Gastrocnemius medialis (tissue), 4 donors: ENCODE measurements at regions of chr3 and their contacts with region 1.

Region 1: GRCh38 chr3:31550452-31551251 is 17.9 kb downstream of the STT3B start:
- DNase-seq: no peak
- ATAC-seq: peak; percentile 57 to 69
- H3K4me3 ChIP-seq: no peak overlapping the region
- H3K27ac ChIP-seq: peak overlapping the region in 1 of 4 donors; percentile 29
- H3K4me1 ChIP-seq: peaks cover 58 to 67% of the 10 kb centered on the region in 2 donors
- H3K27me3 ChIP-seq: no peaks in the 10 kb centered on the region
- CTCF ChIP-seq: peak; percentile 47 to 77 (median 56)
- POLR2A ChIP-seq: no peak

Region 2: DNA sequence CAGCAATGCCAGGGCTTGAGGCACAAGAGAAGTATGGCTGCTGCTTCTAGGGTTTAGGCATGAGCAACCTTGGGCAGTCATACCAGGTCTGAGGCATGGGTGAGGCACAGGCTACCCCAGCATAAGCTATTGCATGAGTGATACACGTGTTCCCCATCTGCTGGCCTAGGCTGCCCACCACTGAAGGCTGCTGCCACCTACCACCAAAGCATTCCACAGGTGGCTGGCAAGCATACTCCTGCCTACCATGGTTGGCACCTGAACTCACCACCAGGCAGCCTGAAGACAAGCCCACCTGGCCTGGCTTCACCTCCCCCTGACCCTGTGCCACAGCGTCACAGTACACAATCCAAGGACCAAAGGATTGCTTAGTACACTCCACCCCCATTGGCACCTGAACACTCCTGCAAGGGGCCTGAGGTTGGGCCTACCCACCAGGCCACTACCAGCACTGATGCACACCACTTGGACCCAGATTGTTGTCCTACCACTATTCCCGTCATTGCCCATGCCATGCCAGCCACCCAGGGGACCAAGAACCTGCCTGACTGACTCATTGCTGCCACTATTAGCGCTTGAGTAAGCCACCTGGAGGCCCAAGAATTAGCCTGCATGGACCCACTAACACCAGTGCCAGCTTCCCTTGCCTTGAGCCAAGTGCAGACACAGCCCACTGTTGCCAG is 97.8 kb after region 1 on chr3:
- in situ Hi-C with region 1: no loop called
- intact Hi-C with region 1: loop called (anchors 5 kb)
- DNase-seq: no peak
- ATAC-seq: no peak
- H3K4me3 ChIP-seq: no peak overlapping the region
- H3K27ac ChIP-seq: no peak overlapping the region
- H3K4me1 ChIP-seq: peaks cover 0 to 7% of the 10 kb centered on the region in 2 donors
- H3K27me3 ChIP-seq: no peaks in the 10 kb centered on the region
- CTCF ChIP-seq: no peak
- POLR2A ChIP-seq: no peak

Region 3: DNA sequence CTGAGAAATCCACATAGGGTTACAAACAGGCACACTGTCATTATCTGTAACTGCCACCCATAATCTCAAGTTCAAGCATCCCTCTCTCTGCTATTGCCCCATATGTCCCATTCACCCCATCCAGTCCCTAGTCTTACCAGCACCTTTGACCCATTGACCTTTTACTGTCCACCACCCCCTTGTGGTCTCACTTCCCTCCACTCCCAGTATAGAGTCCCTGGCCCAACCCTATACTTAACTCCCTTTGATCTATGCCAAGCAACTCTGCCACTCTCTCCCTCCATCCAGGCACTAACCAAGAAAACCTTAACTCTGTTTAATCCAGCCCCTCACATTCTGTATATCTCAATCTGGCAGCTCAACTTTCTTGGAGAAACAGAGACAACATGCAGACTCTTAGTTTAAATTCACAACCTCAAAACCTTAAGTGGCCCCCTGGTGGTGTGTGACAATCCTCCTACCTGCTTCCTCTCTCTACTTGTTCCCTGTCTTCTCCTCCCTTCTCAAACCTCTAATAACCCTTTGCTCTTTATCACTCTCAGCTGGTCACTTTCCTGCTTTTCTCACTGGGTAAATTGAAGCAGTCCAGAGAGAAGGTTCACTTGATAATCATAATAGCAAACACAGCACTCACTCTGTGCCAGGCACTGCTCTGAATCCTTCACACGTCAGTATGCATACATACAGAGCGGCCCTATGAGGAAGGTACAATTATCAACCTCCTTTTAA is 144.8 kb after region 1 on chr3:
- in situ Hi-C with region 1: no loop called
- intact Hi-C with region 1: loop called (anchors 5 kb)
- DNase-seq: no peak
- ATAC-seq: no peak
- H3K4me3 ChIP-seq: no peak overlapping the region
- H3K27ac ChIP-seq: no peak overlapping the region
- H3K4me1 ChIP-seq: no peaks in the 10 kb centered on the region
- H3K27me3 ChIP-seq: no peaks in the 10 kb centered on the region
- CTCF ChIP-seq: peak in 1 of 5 experiments; percentile 13
- POLR2A ChIP-seq: no peak

Region 4: DNA sequence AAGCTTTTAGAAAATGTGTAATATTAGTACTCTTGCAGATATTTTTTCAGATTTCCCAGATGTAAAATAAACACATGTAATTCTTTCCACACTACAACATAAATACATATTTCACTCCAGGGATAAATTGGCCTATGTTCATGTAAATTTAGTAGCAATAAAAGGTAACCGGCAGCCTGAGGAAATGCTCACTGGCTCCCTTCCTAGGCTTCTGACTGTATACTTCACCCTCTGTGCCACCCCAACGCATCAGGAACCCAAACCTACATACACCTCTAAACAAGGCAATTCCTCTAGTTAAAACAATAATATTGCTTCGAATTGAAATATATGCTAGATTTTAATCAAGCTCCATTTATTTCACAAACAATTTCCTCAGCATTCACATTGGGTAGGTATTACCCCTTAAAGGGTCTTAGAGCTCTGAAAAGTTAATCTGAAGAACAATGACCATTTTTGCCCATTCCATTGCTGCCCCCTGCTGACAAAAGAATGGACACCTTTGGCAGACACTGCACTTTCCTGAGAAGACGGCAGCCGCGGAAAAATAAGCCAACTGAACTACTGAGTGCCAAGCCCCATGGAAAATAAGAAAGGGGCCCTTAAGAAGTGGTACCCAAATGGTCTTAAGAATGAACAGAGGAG is 217.9 kb after region 1 on chr3:
- in situ Hi-C with region 1: loop called in 2 of 4 experiments (anchors 5 to 25 kb)
- intact Hi-C with region 1: loop called (anchors 1 kb)
- DNase-seq: peak; percentile 16 to 45
- ATAC-seq: peak; percentile 74 to 90
- H3K4me3 ChIP-seq: no peak overlapping the region
- H3K27ac ChIP-seq: no peak overlapping the region
- H3K4me1 ChIP-seq: no peaks in the 10 kb centered on the region
- H3K27me3 ChIP-seq: no peaks in the 10 kb centered on the region
- CTCF ChIP-seq: peak; percentile 57 to 63 (median 59)
- POLR2A ChIP-seq: no peak

Region 5: GRCh38 chr3:32542807-32543206 is 992.2 kb after region 1 on chr3:
- in situ Hi-C with region 1: no loop called
- intact Hi-C with region 1: no loop called
- DNase-seq: no peak
- ATAC-seq: no peak
- H3K4me3 ChIP-seq: no peak overlapping the region
- H3K27ac ChIP-seq: no peak overlapping the region
- H3K4me1 ChIP-seq: no peaks in the 10 kb centered on the region
- H3K27me3 ChIP-seq: no peaks in the 10 kb centered on the region
- CTCF ChIP-seq: no peak
- POLR2A ChIP-seq: no peak